ENCODE measurements at regions of chr4 and their contacts with region 1.

Region 1: GRCh38 chr4:75844151-75844662 is 58.0 kb downstream of the PPEF2 start:
- DNase-seq: peak; percentile 88
- H3K4me3 ChIP-seq: no peak overlapping the region
- H3K27ac ChIP-seq: peak overlapping the region; percentile 96
- H3K27me3 ChIP-seq: no peaks in the 10 kb centered on the region
- CTCF ChIP-seq: no peak

Region 2: GRCh38 chr4:75530556-75531322 is 313.5 kb before region 1 on chr4:
- CTCF ChIA-PET with region 1: no interaction called
- POLR2A ChIA-PET with region 1: no interaction called
- DNase-seq: no peak
- H3K4me3 ChIP-seq: no peak overlapping the region
- H3K27ac ChIP-seq: no peak overlapping the region
- H3K27me3 ChIP-seq: no peaks in the 10 kb centered on the region
- CTCF ChIP-seq: no peak

Region 3: GRCh38 chr4:75565481-75565880 is 278.7 kb before region 1 on chr4:
- CTCF ChIA-PET with region 1: interaction called, 10 read pairs
- POLR2A ChIA-PET with region 1: interaction called, 3 read pairs
- DNase-seq: no peak
- H3K4me3 ChIP-seq: no peak overlapping the region
- H3K27ac ChIP-seq: no peak overlapping the region
- H3K27me3 ChIP-seq: peaks cover 8% of the 10 kb centered on the region
- CTCF ChIP-seq: no peak

Region 4: DNA sequence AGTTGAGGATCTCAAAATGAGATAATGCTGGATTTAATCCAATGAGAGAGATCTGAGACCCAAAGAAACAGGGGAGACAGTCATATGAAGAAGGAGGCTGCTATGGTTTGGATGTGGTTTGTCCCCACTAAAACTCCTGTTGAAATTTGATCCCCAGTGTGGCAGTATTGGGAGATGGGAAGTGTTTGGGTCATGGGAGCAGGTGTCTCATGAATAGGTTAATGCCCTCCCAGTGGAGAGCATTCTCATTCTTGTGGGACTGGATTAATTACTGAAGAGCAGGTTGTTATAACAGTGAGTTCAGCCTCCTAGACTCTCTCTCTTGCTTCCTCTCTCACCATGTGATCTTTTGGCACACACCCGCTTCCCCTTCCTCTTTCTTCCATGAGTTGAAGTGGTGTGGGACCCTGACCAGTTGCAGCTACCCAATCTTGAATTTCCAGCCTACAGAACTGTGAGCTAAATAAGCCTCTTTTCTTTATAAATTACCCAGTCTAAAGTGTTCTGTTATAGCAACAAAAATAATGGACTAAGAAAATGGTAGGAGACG is 12.3 kb before region 1 on chr4:
- CTCF ChIA-PET with region 1: interaction called, 30 read pairs
- POLR2A ChIA-PET with region 1: no interaction called
- DNase-seq: no peak
- H3K4me3 ChIP-seq: no peak overlapping the region
- H3K27ac ChIP-seq: no peak overlapping the region
- H3K27me3 ChIP-seq: no peaks in the 10 kb centered on the region
- CTCF ChIP-seq: no peak

Measured in AG04450 (cell line).